A673 (cell line): ENCODE measurements at regions of chr19 and their contacts with region 1.

Region 1: DNA sequence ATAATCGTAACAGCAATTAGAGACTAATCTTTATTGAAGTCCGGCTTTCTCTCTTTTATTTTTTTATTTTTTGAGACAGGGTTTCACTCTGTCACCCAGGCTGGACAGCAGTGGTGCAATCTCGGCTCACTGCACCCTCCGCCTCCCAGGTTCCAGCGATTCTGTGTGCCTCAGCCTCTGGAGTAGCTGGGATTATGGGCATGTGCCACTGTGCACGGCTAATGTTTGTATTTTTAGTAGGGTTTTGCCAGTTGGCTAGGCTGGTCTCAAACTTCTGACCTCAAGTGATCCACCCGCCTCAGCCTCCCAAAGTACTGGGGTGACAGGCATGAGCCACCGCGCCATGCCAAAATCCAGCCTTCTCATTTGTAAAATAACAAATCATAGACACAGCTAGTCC is 3.7 kb downstream of the APOC2 start:
- DNase-seq: no peak
- H3K4me3 ChIP-seq: no peak overlapping the region
- H3K27ac ChIP-seq: no peak overlapping the region
- H3K4me1 ChIP-seq: peaks cover 6% of the 10 kb centered on the region
- H3K27me3 ChIP-seq: no peaks in the 10 kb centered on the region
- CTCF ChIP-seq: no peak

Region 2: DNA sequence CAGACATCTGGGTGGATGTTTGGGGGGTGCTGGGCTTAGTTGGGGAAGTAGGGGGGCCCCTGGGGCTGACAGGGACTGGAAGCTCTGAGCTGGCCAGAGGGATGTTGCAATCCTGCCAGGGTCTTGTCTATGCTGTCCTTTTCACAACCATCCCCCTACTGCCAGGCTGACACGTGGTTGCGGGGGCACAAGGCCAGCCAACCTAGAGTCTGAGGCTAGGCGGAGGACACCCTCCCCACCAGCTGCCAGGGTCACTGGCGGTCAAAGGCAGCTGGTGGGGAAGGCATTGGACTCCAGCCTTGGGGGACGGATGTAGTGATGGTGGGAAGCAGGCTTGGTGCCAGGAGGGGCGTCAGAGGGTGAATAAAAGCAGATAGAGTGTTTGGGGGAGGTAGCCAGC is 36.7 kb before region 1 on chr19:
- CTCF ChIA-PET with region 1: interaction called, 10 read pairs
- POLR2A ChIA-PET with region 1: no interaction called
- intact Hi-C with region 1: no loop called
- DNase-seq: no peak
- H3K4me3 ChIP-seq: no peak overlapping the region
- H3K27ac ChIP-seq: no peak overlapping the region
- H3K4me1 ChIP-seq: peaks cover 12% of the 10 kb centered on the region
- H3K27me3 ChIP-seq: no peaks in the 10 kb centered on the region
- CTCF ChIP-seq: no peak

Region 3: GRCh38 chr19:46133101-46133682 is 1183.6 kb after region 1 on chr19:
- CTCF ChIA-PET with region 1: no interaction called
- POLR2A ChIA-PET with region 1: no interaction called
- intact Hi-C with region 1: no loop called
- DNase-seq: peak; percentile 92
- H3K4me3 ChIP-seq: no peak overlapping the region
- H3K27ac ChIP-seq: peak overlapping the region; percentile 92
- H3K4me1 ChIP-seq: peaks cover 23% of the 10 kb centered on the region
- H3K27me3 ChIP-seq: no peaks in the 10 kb centered on the region
- CTCF ChIP-seq: no peak